ENCODE measurements at regions of chr19 and their contacts with region 1.

Region 1: DNA sequence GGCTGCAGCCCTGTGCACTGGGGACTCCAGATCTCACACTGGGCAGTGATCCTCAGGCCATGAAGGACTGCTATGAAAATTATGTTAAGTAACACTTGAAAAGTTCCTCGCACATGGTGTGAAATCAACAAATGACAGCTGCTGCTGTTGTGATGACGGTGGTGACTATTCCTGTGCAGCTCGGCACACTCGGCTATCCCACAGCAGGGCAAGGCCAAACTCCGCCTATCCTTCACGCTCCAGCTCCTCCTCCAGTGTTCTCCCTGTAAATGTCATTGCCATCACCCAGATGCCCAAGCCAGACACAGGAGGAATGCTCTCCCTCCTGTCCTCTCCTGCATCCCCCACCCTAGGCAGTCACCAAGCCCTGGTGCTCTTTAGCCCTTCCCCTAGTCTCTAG is 31.3 kb downstream of the GRIK5 start:
- DNase-seq: no peak
- ATAC-seq: peak; percentile 35 to 99 (median 92)
- H3K4me3 ChIP-seq: no peak overlapping the region
- H3K27ac ChIP-seq: peak overlapping the region; percentile 79
- H3K4me1 ChIP-seq: peaks cover 9% of the 10 kb centered on the region
- H3K27me3 ChIP-seq: peaks cover 0 to 2% (median 0%) of the 10 kb centered on the region in 3 donors
- CTCF ChIP-seq: no peak

Region 2: GRCh38 chr19:41706741-41707501 is 331.7 kb before region 1 on chr19:
- intact Hi-C with region 1: no loop called
- DNase-seq: peak; percentile 22 to 59
- ATAC-seq: no peak
- H3K4me3 ChIP-seq: no peak overlapping the region
- H3K27ac ChIP-seq: no peak overlapping the region
- H3K4me1 ChIP-seq: no peaks in the 10 kb centered on the region
- H3K27me3 ChIP-seq: peaks cover 0 to 23% (median 0%) of the 10 kb centered on the region in 3 donors
- CTCF ChIP-seq: peak; percentile 17

Region 3: GRCh38 chr19:41998246-41999020 is 40.2 kb before region 1 on chr19:
- intact Hi-C with region 1: loop called in 1 of 2 experiments (anchors 5 kb)
- DNase-seq: no peak
- ATAC-seq: peak in 3 of 4 donors; percentile 22 to 67 (median 35)
- H3K4me3 ChIP-seq: peak overlapping the region; percentile 36
- H3K27ac ChIP-seq: no peak overlapping the region
- H3K4me1 ChIP-seq: no peaks in the 10 kb centered on the region
- H3K27me3 ChIP-seq: peaks cover 0 to 89% (median 38%) of the 10 kb centered on the region in 3 donors
- CTCF ChIP-seq: peak; percentile 47